ENCODE measurements at regions of chr10 and their contacts with region 1.

Region 1: DNA sequence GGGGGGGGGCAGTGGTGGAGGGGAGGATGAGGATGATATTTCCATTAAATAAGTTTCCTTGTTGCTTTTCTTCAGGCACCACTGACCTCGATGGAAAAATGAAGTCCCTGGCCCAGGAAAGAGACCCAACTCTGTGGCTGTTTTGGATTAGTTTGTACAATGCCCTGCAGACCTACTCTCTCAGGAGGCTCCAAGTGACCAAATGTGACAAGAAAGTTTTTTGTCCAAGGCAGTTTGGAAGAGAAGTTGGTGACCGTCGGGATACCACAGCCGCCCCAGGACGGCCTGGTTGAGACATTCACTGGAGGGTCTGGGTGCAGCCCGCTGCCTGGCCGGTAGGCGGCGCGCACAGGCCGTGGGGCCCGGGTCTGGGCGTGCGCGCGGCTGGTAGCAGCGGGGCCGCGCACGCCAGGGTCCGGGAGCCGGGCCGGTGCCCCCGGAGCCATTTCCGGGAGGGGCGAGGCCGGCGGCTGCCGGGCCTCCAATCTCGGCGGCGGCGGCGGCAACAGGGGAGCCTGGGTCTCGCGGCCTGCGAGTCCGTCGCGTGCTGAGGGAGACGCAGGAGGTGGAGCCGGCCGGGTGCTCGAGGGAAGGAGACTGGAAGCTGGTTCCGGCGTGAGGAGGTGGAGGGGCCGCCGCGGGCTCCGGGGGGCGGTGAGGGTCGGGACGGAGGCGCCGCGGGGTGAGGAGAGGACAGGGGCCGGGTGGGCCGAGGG is at the start of gene SGPL1:
- DNase-seq: peak; percentile 79 to 96
- H3K4me3 ChIP-seq: peak within 1 kb of the TSS; percentile 78
- CTCF ChIP-seq: peak in 1 of 3 donors; percentile 84
- POLR2A ChIP-seq: no peak
- total RNA-seq, gene SGPL1: 58.0 to 120 (median 74.0) TPM

Region 2: DNA sequence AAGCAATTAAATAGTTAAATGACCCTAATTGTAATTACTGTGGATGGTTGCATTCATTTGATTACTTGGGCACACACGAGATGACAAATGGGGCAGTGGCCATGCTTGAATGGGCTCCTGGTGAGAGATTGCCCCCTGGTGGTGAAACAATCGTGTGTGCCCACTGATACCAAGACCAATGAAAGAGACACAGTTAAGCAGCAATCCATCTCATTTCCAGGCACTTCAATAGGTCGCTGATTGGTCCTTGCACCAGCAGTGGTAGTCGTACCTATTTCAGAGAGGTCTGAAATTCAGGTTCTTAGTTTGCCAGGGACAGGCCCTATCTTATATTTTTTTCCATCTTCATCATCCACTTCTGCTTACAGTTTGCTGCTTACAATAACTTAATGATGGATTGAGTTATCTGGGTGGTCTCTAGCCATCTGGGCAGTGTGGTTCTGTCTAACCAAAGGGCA is 64.4 kb after region 1 on chr10:
- intact Hi-C with region 1: loop called (anchors 10 kb)
- DNase-seq: peak; percentile 68 to 92
- H3K4me3 ChIP-seq: no peak overlapping the region
- CTCF ChIP-seq: peak in 1 of 3 donors; percentile 59
- POLR2A ChIP-seq: no peak